ENCODE measurements at regions of chr11 and their contacts with region 1.

Region 1: DNA sequence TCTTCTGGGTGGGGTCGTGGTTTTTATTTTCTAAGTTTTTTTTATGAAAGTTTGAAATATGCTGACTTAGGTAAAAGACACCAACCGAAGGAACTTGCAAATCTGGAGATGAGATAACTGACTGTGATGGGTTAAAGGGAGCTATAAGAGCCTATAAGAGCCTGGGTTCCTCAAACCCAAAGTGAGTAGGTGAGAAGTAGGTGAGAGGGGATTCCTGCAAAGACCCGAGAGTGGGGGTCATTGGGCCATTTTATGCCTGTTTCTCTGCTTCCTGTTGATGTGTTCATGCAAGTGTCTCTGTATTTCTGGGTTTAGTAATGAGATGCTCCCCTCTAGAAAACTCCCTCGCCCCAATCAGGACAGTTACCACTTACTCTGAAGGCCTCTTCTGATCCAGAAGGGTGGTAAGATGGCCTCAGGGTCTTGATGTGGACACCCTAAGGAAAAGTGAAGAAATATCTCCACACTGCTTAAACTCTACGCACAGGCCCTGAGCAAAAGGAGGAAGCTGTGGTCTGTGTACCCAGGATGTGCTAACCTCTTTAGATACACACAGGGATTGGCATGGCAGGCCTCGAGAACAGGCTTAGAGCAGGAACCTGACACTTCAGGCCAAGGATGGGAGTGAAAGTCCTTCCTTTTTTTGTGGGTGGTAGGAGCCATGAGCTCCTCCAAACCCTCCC is 1.8 kb downstream of the FLI1 start:
- DNase-seq: peak; percentile 38
- H3K4me3 Mint-ChIP-seq: peak overlapping the region; percentile 87
- H3K27ac Mint-ChIP-seq: peak overlapping the region; percentile 91
- H3K4me1 Mint-ChIP-seq: peaks cover 74% of the 10 kb centered on the region
- H3K27me3 Mint-ChIP-seq: peaks cover 15% of the 10 kb centered on the region

Region 2: GRCh38 chr11:128026596-128026995 is 669.1 kb before region 1 on chr11:
- intact Hi-C with region 1: loop called (anchors 2 kb)
- DNase-seq: no peak
- H3K4me3 Mint-ChIP-seq: no peak overlapping the region
- H3K27ac Mint-ChIP-seq: no peak overlapping the region
- H3K4me1 Mint-ChIP-seq: peaks cover 4% of the 10 kb centered on the region
- H3K27me3 Mint-ChIP-seq: peaks cover 42% of the 10 kb centered on the region

Region 3: DNA sequence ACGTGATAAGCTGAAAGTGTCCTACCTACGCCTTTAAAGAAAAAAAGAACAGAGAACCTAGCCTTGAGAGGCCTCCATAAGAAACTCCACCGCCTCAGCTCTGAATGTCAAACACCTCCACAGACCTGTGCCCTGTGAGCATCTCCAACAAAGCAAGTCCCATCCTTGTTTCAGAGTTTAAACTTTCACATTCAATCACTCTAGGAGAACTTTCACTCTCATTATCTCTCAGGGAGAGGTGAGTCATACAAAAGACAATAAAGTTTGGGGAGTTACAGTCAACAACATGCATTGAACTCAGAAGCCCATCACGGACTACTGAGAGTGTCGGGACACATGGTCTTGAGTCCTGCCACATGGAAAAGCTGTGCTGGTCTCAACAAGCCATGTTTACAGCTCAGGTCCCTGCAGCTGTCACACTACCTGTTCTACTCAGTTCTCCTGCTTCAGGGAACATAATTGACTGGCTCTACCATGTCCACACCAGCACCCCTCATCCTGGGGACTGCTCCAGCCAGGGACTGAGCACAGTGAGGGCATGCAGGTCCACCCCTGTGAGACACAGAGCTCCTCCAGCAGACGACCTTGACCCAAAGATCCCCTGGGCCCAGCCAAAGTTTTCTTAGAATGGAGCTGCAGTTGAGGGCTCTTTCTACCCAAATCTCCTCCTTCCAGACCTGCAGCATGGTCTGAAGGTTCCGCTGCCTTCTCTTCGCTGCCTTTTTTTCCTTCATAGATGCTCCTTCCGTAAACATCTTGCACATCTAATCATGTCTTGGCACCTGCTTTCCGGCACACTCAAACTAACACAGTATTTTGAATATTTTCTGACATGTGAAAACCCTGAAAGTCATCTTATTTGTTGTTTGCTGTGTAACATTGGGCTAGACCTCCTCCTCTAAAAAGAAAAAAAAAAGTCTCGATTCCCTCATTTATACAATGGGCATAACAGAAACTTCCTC is 223.3 kb before region 1 on chr11:
- intact Hi-C with region 1: loop called (anchors 2 kb)
- DNase-seq: peak; percentile 61
- H3K4me3 Mint-ChIP-seq: peak overlapping the region; percentile 80
- H3K27ac Mint-ChIP-seq: peak overlapping the region; percentile 95
- H3K4me1 Mint-ChIP-seq: peaks cover 94% of the 10 kb centered on the region
- H3K27me3 Mint-ChIP-seq: no peaks in the 10 kb centered on the region

Region 4: DNA sequence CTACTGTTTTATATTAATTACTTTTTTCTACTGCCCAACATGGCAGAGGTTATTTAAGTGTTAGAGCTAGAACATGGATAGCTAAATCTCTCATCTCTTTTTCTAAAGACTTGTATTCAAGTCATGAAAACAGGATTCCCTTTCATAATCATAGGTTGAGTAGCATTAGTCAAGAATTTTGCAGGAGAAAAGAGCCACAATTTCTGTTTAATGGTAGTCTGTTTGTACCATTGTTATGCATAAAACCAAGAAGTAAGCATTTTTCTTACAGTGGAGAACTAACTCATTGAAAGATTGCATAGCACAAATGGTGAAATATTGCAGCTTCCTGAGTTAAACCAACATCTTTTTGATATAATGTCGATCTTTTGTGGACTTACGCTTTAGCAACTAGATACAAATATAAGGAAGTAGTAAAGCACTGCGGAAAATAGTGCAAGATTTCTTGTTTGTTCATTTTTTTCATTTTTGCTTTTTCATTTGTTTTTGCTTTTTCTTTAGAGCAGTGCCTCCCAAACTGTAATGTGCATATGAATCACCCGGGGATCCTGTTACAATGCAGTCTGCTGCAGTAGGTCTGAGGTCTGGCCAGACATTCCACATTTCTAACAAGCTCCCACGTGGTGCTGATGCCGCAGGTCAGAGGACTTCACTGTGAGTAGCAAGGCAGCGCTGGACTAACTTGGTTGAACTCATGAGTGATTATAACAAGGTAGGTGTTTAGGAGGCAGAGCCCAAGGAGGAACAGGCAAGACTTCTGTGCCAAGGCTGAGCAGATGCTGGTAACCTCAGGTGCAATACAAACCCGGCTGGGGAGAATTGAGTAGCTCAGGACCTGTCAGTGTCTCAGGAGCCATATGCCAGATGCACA is 112.9 kb before region 1 on chr11:
- intact Hi-C with region 1: loop called (anchors 5 kb)
- DNase-seq: no peak
- H3K4me3 Mint-ChIP-seq: no peak overlapping the region
- H3K27ac Mint-ChIP-seq: peak overlapping the region; percentile 80
- H3K4me1 Mint-ChIP-seq: peaks cover 51% of the 10 kb centered on the region
- H3K27me3 Mint-ChIP-seq: peaks cover 6% of the 10 kb centered on the region

Region 5: GRCh38 chr11:128593281-128593680 is 102.4 kb before region 1 on chr11:
- intact Hi-C with region 1: no loop called
- DNase-seq: no peak
- H3K4me3 Mint-ChIP-seq: no peak overlapping the region
- H3K27ac Mint-ChIP-seq: no peak overlapping the region
- H3K4me1 Mint-ChIP-seq: no peaks in the 10 kb centered on the region
- H3K27me3 Mint-ChIP-seq: peaks cover 8% of the 10 kb centered on the region

Region 6: DNA sequence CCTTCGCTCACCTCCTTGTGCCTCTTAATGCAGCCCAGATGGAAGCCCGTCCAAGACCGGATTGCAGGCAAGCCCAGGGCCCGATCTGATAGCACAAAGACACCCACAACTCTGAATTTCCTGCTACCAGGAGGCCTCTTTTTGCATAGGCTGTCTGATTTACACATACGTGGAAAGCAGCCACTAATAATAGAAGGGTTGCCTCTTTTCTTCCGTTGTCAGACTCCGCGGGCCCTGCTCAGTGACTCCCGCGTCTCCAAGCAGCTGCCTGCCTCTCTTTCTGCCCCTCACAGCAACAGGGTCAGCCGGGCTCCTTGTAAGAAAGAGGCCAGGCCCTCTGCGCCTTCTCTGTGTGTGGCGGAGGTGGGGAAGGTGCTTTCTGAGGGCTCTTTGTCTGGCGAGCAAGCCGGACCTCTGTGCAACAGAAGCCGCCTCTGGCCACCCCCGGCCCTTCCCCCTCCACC is 24.9 kb after region 1 on chr11:
- intact Hi-C with region 1: loop called (anchors 1 kb)
- DNase-seq: no peak
- H3K4me3 Mint-ChIP-seq: peak overlapping the region; percentile 75
- H3K27ac Mint-ChIP-seq: peak overlapping the region; percentile 87
- H3K4me1 Mint-ChIP-seq: peaks cover 99% of the 10 kb centered on the region
- H3K27me3 Mint-ChIP-seq: no peaks in the 10 kb centered on the region

Region 7: DNA sequence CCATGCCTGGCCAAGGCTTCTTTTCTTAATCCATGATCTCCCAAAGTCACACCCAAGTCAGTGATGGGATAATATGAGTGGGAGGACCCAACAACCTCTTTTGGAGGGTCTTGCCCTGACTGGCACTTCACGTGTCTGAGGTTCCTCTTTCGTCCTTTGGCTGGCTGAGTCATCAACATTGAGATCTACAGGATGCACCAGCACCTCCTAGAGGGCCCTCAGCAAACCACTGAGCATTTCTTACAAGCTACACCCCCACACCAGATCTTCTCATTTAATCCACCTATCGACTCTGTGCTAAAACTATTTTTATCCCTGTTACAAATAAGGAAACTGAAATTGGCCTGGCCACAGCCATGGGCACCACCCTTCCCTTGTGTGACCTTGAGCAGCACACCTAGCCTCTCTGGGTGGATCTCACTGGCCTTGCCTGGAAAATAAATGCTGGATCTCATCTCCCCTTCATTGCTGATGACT is 61.6 kb after region 1 on chr11:
- intact Hi-C with region 1: loop called (anchors 1 kb)
- DNase-seq: peak; percentile 55
- H3K4me3 Mint-ChIP-seq: peak overlapping the region; percentile 63
- H3K27ac Mint-ChIP-seq: peak overlapping the region; percentile 95
- H3K4me1 Mint-ChIP-seq: peaks cover 68% of the 10 kb centered on the region
- H3K27me3 Mint-ChIP-seq: no peaks in the 10 kb centered on the region

Measured in activated T-helper 1 cell treated with anti-CD3 and anti-CD28 coated beads, Interleukin-12 subunit alpha, Interleukin-12 subunit beta, Interleukin-2, Interleukin-4 antibody, amounts not matched to agents 30 ng/mL and 10 ng/mL and 1 ng/mL, durations not matched to agents 14 hours and 24 hours and 36 hours (primary cell).